SK-MEL-5 (cell line): ENCODE measurements at regions of chr1 and their contacts with region 1.

Region 1: GRCh38 chr1:78607334-78607927 is 12.8 kb upstream of the IFI44L start:
- DNase-seq: peak; percentile 34

Region 2: DNA sequence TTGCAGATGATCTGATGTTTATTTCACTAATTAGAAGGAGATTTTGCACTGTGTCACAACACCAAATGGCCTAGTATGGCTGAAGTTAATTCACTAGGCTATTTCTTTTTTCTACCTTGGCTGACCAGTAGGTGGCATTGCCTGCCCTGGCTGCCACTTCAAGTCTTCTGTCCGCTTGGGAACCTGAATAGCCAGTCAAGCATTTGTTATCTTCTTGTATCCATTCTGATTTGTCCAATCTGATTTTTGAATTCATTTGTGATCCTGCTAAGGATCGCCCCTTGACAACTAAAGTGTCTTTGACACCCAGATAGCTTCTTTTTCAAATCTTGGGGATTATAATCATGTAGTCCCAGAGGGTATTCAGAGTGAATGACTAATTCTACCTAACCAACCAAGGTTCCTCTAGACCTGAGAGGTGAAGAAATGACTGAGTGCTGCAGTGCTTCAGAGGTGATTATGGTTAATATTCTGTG is 462.3 kb before region 1 on chr1:
- in situ Hi-C with region 1: loop called (anchors 10 kb)
- DNase-seq: peak; percentile 81

Region 3: DNA sequence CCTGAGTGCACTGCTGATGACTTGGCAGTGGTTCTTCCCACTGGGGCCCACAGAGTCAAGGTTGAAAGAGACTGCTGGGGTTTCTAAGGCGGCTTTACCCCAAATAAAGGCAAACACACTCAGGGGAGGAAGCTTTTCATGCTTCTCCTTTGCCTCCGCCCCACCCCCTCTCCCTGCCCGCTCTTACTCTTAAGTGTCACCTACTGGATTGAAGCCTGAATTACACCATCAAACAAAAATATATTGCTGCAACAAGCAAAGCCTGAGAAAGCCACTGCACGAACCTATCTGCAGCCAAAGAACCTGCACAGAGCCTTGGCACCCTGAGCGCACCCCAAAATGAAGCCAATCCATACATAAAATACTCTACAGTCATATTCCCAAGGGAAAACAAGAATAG is 53.6 kb before region 1 on chr1:
- in situ Hi-C with region 1: no loop called
- DNase-seq: peak; percentile 41

Region 4: DNA sequence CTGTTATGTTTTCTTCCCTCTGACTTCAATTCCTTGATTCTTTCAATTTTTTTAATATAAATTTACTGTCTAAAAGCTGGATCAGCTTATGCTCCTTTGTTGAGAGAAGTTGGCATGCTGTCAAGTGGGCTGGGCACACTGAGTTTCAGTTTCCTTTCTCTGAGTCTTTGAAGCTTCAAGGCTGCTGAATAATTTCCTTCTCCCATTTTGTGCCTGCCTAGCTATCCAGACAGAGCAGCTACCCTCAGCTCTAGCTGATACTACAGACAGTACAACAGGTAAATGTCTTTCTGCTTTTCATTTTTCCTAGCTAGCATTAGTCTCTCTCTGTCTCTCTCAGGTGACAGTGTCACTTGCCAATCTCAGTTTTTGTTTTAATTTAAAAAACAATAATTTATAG is 42.2 kb after region 1 on chr1 and contains the start of gene IFI44:
- in situ Hi-C with region 1: no loop called
- DNase-seq: peak; percentile 54
- total RNA-seq, gene IFI44: 0.53 and 0.66 TPM in 2 replicates